ENCODE measurements at regions of chr2 and their contacts with region 1.

Region 1: GRCh38 chr2:126749537-126749936 is 93.6 kb downstream of the GYPC start:
- DNase-seq: peak in 2 of 4 experiments; percentile 37 to 49
- ATAC-seq: peak; percentile 90
- H3K4me3 ChIP-seq: no peak overlapping the region
- H3K27ac ChIP-seq: no peak overlapping the region
- H3K4me1 ChIP-seq: no peaks in the 10 kb centered on the region; a peak in 1 of 5 replicates
- H3K27me3 ChIP-seq: peaks cover 0 to 20% of the 10 kb centered on the region in 2 experiments; a peak in 1 of 5 replicates
- CTCF ChIP-seq: peak; percentile 52 to 73 (median 58)
- EP300 ChIP-seq: no peak
- POLR2A ChIP-seq: no peak
- RAD21 ChIP-seq: peak; percentile 38 to 74; a peak in 2 of 4 replicates

Region 2: DNA sequence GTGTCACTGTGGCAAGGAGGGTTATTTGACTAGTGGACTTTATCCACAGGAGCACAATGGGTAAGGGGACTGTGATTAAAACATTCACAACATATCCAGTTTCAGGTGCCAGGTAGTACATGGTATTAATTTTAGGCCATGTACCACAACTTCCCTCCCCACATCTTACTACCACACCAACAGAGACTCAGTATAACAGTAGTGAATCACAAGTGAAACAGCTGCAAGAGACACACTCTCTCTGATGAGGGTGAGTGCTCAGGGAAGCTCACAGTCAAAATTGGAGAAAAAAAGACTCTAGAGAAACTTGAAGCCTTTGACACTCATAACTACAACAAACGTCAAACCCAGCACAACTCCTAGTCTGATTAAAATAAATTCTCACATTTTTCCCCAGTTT is 461.2 kb before region 1 on chr2:
- CTCF ChIA-PET with region 1: no interaction called
- POLR2A ChIA-PET with region 1: no interaction called
- in situ Hi-C with region 1: no loop called
- intact Hi-C with region 1: no loop called
- DNase-seq: no peak
- ATAC-seq: peak; percentile 21; the same call in 1 of the 3 replicates
- H3K4me3 ChIP-seq: no peak overlapping the region
- H3K27ac ChIP-seq: no peak overlapping the region
- H3K4me1 ChIP-seq: no peaks in the 10 kb centered on the region
- H3K27me3 ChIP-seq: no peaks in the 10 kb centered on the region
- CTCF ChIP-seq: no peak
- EP300 ChIP-seq: no peak
- POLR2A ChIP-seq: no peak
- RAD21 ChIP-seq: no peak

Region 3: GRCh38 chr2:126614524-126615227 is 134.9 kb before region 1 on chr2:
- CTCF ChIA-PET with region 1: no interaction called
- POLR2A ChIA-PET with region 1: no interaction called
- in situ Hi-C with region 1: no loop called
- intact Hi-C with region 1: loop called (anchors 5 kb)
- DNase-seq: no peak
- ATAC-seq: peak; percentile 77
- H3K4me3 ChIP-seq: no peak overlapping the region
- H3K27ac ChIP-seq: no peak overlapping the region
- H3K4me1 ChIP-seq: no peaks in the 10 kb centered on the region
- H3K27me3 ChIP-seq: no peaks in the 10 kb centered on the region
- CTCF ChIP-seq: peak; percentile 23 to 59 (median 31); a peak in 4 of 6 replicates
- EP300 ChIP-seq: no peak
- POLR2A ChIP-seq: no peak
- RAD21 ChIP-seq: peak; percentile 52 to 61